CD4-positive, alpha-beta memory T cell (primary cell): ENCODE measurements at regions of chr10 and their contacts with region 1.

Region 1: DNA sequence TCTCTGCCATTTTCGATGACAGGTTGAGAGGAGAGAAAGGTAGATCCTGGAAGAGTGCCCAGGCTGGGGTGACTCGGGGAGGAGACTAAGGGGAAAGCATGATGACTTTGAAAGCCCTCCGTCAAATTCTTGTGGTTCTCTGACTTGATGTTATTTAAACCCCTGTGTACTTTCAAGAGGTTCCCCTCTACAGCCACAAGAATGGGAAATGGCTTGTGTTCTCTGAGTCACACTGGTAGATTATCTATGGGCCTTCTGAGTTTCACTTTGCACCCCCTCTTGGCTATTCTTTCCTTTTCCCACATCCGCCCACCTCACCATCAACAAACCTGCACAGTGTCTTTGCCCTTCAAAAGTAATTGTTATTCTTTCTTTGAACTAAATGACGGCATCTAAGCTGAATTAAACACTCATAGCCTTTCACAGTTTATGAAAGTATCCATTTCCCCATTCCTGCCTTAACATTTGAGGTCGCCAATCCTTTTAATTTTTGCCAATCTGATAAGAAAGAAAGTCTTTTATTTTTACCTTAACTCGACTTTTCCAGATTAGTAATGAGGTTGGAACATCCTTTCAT is 24.1 kb downstream of the PRF1 start:
- DNase-seq: peak; percentile 70 to 86 (median 73)
- H3K4me3 ChIP-seq: no peak overlapping the region
- H3K4me3 Mint-ChIP-seq: peak overlapping the region; percentile 3 to 75 (median 56)
- H3K27ac ChIP-seq: peak overlapping the region; percentile 9
- H3K27ac Mint-ChIP-seq: peak overlapping the region; percentile 77 to 88 (median 84)
- H3K4me1 ChIP-seq: peaks cover 49% of the 10 kb centered on the region
- H3K4me1 Mint-ChIP-seq: peaks cover 33 to 50% (median 45%) of the 10 kb centered on the region in 4 donors
- H3K27me3 ChIP-seq: no peaks in the 10 kb centered on the region
- H3K27me3 Mint-ChIP-seq: no peaks in the 10 kb centered on the region

Region 2: GRCh38 chr10:70602665-70603448 is 24.4 kb after region 1 on chr10 and contains the start of gene PRF1:
- CTCF ChIA-PET with region 1: no interaction called
- POLR2A ChIA-PET with region 1: interaction called, 28 read pairs
- intact Hi-C with region 1: loop called (anchors 2 kb)
- DNase-seq: peak; percentile 74 to 82 (median 75)
- H3K4me3 ChIP-seq: peak within 1 kb of the TSS; percentile 56 to 74
- H3K4me3 Mint-ChIP-seq: peak within 1 kb of the TSS; percentile 93 to 98 (median 96)
- H3K27ac ChIP-seq: peak within 1 kb of the TSS; percentile 53
- H3K27ac Mint-ChIP-seq: peak within 1 kb of the TSS; percentile 85 to 97 (median 90)
- H3K4me1 ChIP-seq: peaks cover 44% of the 10 kb centered on the region
- H3K4me1 Mint-ChIP-seq: peaks cover 24 to 61% (median 43%) of the 10 kb centered on the region in 4 donors
- H3K27me3 ChIP-seq: no peaks in the 10 kb centered on the region
- H3K27me3 Mint-ChIP-seq: no peaks in the 10 kb centered on the region
- total RNA-seq, gene PRF1: 18.0 to 19.5 TPM

Region 3: DNA sequence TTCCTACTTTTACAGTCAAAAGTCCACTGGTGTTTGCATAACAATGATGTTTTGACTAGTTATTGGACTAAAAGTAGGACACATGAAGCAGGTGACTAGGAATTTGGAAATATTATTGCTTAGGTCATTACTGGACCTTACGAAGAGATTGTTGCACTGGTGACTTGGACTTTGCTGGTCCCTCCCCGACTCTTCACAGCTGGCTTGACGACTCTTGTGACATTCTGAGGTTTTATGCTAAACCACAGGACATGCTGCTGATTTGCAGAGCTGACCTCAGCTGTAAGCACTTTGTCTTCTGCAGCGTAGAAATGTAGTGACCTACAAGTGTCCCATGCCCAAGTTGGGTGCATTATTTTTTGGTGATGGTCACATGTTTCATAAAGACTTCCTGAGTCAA is 288.0 kb after region 1 on chr10:
- CTCF ChIA-PET with region 1: no interaction called
- POLR2A ChIA-PET with region 1: no interaction called
- intact Hi-C with region 1: no loop called
- DNase-seq: no peak
- H3K4me3 ChIP-seq: no peak overlapping the region
- H3K4me3 Mint-ChIP-seq: peak overlapping the region in 1 of 8 donors; percentile 3
- H3K27ac ChIP-seq: no peak overlapping the region
- H3K27ac Mint-ChIP-seq: no peak overlapping the region
- H3K4me1 ChIP-seq: no peaks in the 10 kb centered on the region
- H3K4me1 Mint-ChIP-seq: peaks cover 0 to 4% (median under 1%) of the 10 kb centered on the region in 4 donors
- H3K27me3 ChIP-seq: no peaks in the 10 kb centered on the region
- H3K27me3 Mint-ChIP-seq: no peaks in the 10 kb centered on the region